HEK293T (cell line): ENCODE measurements at regions of chr6 and their contacts with region 1.

Region 1: GRCh38 chr6:32933636-32934085 is 7.2 kb downstream of the HLA-DMB start:
- DNase-seq: peak; percentile 78

Region 2: DNA sequence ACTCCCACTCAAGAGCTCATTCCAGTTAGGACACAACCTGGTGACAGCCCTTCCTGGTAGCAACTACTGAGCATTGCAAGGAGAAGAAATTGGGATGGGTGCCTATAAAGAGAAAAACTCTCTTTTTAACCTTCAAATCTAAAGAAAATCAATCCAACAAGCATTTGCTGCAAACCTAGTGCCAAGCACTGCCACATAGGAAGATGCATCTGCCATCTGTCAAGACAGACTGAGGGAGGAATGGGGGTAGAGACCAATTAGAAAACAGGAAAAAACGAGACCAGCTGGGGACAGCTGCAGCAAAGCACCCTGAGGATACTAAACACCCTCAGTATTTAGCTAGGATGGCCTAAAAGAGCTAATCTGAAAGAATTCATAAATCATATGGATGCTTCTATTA is 20.7 kb before region 1 on chr6:
- CTCF ChIA-PET with region 1: interaction called, 15 read pairs
- POLR2A ChIA-PET with region 1: no interaction called
- DNase-seq: no peak

Region 3: DNA sequence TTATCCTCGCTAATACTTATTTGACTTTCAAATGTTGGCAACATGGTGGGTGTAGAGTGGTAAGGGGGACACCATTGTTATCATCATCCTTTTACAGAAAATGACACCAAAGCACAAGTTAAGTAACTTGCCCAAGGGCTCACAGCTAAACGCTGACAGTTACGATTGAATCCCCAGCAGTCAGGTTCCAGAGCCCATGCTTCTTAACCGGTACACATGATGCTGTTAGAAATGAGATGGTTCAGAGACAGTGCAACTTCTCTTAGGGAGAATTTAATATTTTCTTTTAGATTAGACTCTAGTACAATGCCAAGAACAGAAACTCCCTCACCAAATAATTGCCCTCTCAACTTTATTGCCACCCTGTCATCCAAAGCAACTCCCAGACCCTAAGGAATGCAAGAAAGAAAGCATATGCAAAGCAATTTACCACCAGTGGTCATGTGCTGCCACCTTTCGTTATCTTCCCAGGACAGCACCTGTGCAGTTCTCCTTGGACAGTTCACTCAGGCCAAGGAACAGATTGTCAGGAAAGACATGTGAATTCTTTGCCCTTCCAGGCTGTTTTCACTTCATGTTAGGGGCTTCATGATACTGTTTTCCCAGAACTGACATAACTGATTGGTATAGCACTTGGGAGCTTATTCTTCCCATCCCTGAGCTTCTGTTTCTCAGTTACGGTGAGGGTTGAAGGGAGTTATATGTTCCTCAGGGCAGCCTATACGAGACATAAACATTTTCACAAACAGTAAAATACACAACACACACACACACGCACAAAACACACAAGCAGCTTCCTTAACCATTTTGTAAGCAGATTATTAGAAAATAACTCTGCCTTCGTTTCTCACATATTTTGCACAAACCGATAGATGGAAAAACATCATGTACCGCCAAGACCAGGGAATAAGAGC is 14.1 kb after region 1 on chr6:
- CTCF ChIA-PET with region 1: interaction called, 24 read pairs
- POLR2A ChIA-PET with region 1: no interaction called
- DNase-seq: peak; percentile 59

Region 4: DNA sequence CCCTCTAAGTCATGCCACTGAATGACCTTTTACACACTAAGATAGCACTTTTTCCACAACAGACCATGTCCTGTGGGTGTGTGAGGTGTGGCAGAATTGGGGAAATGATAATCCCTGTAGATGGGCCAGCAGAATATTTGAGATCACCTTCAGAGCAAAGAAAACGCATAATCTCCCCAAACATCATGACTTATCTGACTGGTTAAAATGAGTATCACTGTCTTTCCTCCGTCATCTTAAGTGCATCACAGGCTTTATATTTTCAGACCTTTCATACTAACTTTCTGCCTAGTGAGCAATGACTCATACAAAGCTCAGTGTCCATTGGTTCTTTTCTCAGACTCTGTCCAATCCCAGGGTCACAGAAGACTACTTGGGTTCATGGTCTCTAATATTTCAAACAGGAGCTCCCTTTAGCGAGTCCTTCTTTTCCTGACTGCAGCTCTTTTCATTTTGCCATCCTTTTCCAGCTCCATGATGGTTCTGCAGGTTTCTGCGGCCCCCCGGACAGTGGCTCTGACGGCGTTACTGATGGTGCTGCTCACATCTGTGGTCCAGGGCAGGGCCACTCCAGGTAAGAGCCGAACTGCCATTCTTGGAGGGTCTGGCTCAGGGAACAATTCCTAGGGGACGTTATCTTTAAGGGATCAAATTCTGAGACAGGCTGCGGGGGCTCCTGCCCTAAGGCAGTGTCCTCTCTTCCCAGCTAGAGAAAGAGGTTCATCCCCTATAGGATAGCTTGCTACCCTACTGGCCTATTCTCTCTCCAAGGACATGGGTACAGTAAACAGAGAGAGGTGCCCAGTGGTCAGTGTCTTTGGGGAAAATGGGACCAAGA is 142.1 kb after region 1 on chr6 and contains the start of gene HLA-DPB1:
- CTCF ChIA-PET with region 1: no interaction called
- POLR2A ChIA-PET with region 1: no interaction called
- DNase-seq: peak; percentile 61

Region 5: DNA sequence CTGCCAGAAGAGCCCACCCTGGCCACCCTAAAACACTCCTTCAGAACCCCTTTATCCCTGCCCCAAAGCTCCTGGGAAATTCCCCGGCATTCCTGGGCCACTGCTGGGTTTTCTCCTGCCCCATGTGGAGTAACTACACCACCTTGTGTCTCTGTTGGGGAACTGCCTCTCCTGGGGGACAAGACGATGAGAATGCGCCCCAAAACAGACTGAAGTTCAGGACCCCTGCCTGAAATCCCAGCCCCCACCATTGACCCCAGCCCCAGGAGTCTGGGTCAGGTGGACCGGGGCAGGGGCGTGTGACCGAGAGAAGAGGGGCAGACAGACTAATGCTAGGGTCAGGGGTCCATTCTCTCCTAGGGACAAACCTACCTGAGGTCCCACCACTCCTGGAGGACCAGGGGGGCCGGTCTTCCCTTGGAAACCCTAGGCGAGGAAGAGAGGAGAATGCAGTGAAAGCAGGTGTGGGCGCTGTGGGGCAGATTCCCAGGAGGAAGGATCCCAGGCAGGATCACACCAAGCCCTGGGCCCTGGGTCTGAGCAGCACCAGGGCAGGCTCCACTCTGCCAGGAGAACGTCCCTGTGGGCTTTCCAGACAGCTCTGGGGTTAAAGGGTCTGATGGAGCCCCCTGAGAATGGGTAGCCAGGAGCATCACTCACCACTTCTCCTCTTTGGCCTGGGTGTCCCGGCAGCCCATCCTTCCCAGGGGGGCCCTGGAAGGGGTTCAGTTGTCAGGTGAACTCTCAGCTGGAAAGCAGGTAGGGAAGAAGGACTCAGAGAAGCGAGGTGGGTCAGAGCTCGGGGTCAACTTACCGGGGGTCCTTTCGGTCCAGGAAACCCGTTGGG is 239.2 kb after region 1 on chr6:
- CTCF ChIA-PET with region 1: no interaction called
- POLR2A ChIA-PET with region 1: no interaction called
- DNase-seq: peak; percentile 36